Caco-2 (cell line): ENCODE measurements at regions of chr18 and their contacts with region 1.

Region 1: GRCh38 chr18:23143016-23143814 is 7.9 kb downstream of the CABLES1 start:
- DNase-seq: peak; percentile 27 to 48
- H3K4me3 ChIP-seq: no peak overlapping the region
- H3K4me3 Mint-ChIP-seq: peak overlapping the region; percentile 5
- H3K27ac Mint-ChIP-seq: peak overlapping the region; percentile 95
- H3K4me1 ChIP-seq: peaks cover 42% of the 10 kb centered on the region
- H3K4me1 Mint-ChIP-seq: peaks cover 32% of the 10 kb centered on the region
- H3K27me3 ChIP-seq: no peaks in the 10 kb centered on the region
- H3K27me3 Mint-ChIP-seq: no peaks in the 10 kb centered on the region
- CTCF ChIP-seq: no peak

Region 2: GRCh38 chr18:23067236-23067635 is 76.0 kb before region 1 on chr18:
- CTCF ChIA-PET with region 1: no interaction called
- POLR2A ChIA-PET with region 1: no interaction called
- intact Hi-C with region 1: no loop called
- DNase-seq: no peak
- H3K4me3 ChIP-seq: no peak overlapping the region
- H3K4me3 Mint-ChIP-seq: no peak overlapping the region
- H3K27ac Mint-ChIP-seq: no peak overlapping the region
- H3K4me1 ChIP-seq: no peaks in the 10 kb centered on the region
- H3K4me1 Mint-ChIP-seq: no peaks in the 10 kb centered on the region
- H3K27me3 ChIP-seq: no peaks in the 10 kb centered on the region
- H3K27me3 Mint-ChIP-seq: no peaks in the 10 kb centered on the region
- CTCF ChIP-seq: no peak

Region 3: DNA sequence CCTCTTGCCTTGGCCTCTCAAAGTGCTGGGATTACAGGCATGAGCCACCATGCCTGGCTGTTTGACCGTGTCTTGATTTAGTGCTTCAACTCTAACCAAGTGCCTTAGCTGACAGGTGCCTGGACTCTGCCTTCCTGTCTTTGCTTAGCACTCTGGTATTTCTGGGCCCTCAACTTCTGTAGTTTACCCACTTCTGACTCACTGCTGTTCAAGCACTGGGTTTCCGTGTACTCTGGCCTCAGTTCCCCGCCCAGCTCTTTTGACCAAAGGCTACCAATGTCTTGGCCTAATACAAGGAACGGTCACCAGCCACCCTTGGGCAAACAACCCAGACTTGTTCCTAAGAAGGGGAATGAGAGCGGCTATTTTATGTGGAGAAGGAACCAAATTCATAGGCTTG is 43.6 kb before region 1 on chr18:
- CTCF ChIA-PET with region 1: no interaction called
- POLR2A ChIA-PET with region 1: interaction called, 10 read pairs
- intact Hi-C with region 1: no loop called
- DNase-seq: peak; percentile 89 to 94
- H3K4me3 ChIP-seq: no peak overlapping the region
- H3K4me3 Mint-ChIP-seq: peak overlapping the region; percentile 63
- H3K27ac Mint-ChIP-seq: peak overlapping the region; percentile 95
- H3K4me1 ChIP-seq: peaks cover 62% of the 10 kb centered on the region
- H3K4me1 Mint-ChIP-seq: peaks cover 31% of the 10 kb centered on the region
- H3K27me3 ChIP-seq: no peaks in the 10 kb centered on the region
- H3K27me3 Mint-ChIP-seq: no peaks in the 10 kb centered on the region
- CTCF ChIP-seq: no peak

Region 4: GRCh38 chr18:23178661-23179081 is 35.5 kb after region 1 on chr18:
- CTCF ChIA-PET with region 1: no interaction called
- POLR2A ChIA-PET with region 1: no interaction called
- intact Hi-C with region 1: loop called (anchors 5 kb)
- DNase-seq: peak in 1 of 2 experiments; percentile 19
- H3K4me3 ChIP-seq: no peak overlapping the region
- H3K4me3 Mint-ChIP-seq: no peak overlapping the region
- H3K27ac Mint-ChIP-seq: peak overlapping the region; percentile 67
- H3K4me1 ChIP-seq: peaks cover 11% of the 10 kb centered on the region
- H3K4me1 Mint-ChIP-seq: peaks cover 26% of the 10 kb centered on the region
- H3K27me3 ChIP-seq: no peaks in the 10 kb centered on the region
- H3K27me3 Mint-ChIP-seq: no peaks in the 10 kb centered on the region
- CTCF ChIP-seq: no peak

Region 5: DNA sequence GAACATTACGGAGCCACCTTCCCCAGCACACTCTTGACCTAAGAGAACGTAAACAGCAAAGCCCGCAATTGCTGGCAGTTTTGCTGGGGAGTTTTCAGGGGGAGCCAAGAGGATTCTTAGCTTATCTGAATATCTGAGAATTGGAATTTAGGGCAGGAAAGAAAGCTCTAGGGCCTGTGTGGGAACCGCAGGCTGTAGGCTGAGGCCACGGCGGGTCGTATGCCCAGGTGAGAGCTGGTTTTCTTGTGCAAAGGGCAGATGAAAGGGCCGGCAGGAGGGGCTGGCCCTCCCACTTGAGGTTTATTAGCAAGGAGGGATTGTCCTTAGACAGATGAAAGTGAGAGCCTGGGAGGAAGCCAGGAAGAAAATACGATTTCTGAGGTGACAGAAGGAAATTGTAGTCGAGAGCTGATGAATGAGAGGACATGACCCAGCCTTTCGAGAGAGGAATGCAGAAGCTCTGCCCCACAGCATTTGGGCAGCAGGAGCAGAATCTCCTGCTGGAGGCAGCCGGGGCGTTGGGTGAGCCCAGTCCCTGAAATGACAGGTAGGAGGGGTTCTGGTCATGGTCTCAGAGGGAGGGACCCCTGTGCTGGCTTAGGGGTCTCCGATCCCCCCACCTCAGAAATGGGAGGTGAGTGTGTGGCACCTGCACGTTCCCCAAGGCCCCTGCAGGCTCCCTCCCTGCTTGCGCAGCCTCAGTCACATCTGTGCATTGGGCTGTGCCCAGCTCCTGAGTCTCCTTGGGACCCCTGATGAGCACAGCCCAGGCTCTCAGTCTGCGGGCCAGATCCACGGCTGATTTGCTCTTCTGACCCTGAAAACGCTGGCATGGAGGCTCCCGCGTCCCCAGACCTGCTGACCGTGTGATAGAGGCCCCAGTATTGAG is 53.1 kb after region 1 on chr18:
- CTCF ChIA-PET with region 1: no interaction called
- POLR2A ChIA-PET with region 1: no interaction called
- intact Hi-C with region 1: loop called (anchors 5 kb)
- DNase-seq: peak; percentile 68 to 74
- H3K4me3 ChIP-seq: no peak overlapping the region
- H3K4me3 Mint-ChIP-seq: no peak overlapping the region
- H3K27ac Mint-ChIP-seq: peak overlapping the region; percentile 51
- H3K4me1 ChIP-seq: peaks cover 16% of the 10 kb centered on the region
- H3K4me1 Mint-ChIP-seq: peaks cover 26% of the 10 kb centered on the region
- H3K27me3 ChIP-seq: no peaks in the 10 kb centered on the region
- H3K27me3 Mint-ChIP-seq: no peaks in the 10 kb centered on the region
- CTCF ChIP-seq: no peak